Calu3 (cell line): ENCODE measurements at regions of chr17 and their contacts with region 1.

Region 1: GRCh38 chr17:37067555-37068111 is 118.9 kb downstream of the AATF start:
- DNase-seq: peak; percentile 94
- H3K4me3 Mint-ChIP-seq: peak overlapping the region; percentile 38
- H3K27ac Mint-ChIP-seq: peak overlapping the region; percentile 12
- H3K4me1 Mint-ChIP-seq: peaks cover 19% of the 10 kb centered on the region
- H3K27me3 Mint-ChIP-seq: peaks cover 47% of the 10 kb centered on the region
- CTCF ChIP-seq: no peak

Region 2: GRCh38 chr17:37081287-37081686 is 13.7 kb after region 1 on chr17:
- CTCF ChIA-PET with region 1: interaction called, 16 read pairs
- intact Hi-C with region 1: no loop called
- DNase-seq: no peak
- H3K4me3 Mint-ChIP-seq: no peak overlapping the region
- H3K27ac Mint-ChIP-seq: peak overlapping the region; percentile 3
- H3K4me1 Mint-ChIP-seq: no peaks in the 10 kb centered on the region
- H3K27me3 Mint-ChIP-seq: no peaks in the 10 kb centered on the region
- CTCF ChIP-seq: no peak

Region 3: DNA sequence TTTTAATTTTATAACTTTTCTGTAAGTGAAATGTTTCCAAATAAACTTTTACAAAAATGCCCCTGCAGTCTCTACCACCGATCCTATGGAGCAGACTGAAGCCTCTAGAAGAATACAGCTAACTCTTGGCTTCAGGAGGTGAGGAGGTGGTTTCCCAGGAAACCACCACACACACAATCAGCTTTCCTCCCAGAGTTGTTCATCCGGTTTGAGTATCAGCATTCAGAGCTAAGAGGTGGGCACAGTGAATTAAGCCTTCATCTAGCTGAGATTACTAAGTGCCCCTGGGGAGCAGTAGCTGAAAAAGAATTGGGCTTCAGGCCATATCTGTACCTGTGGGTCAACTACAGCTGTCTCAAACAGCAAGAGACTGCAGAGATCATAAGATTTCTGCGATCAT is 20.8 kb after region 1 on chr17:
- CTCF ChIA-PET with region 1: interaction called, 16 read pairs
- intact Hi-C with region 1: no loop called
- DNase-seq: peak; percentile 83
- H3K4me3 Mint-ChIP-seq: no peak overlapping the region
- H3K27ac Mint-ChIP-seq: peak overlapping the region; percentile 46
- H3K4me1 Mint-ChIP-seq: peaks cover 31% of the 10 kb centered on the region
- H3K27me3 Mint-ChIP-seq: no peaks in the 10 kb centered on the region
- CTCF ChIP-seq: no peak